ENCODE measurements at regions of chr9 and their contacts with region 1.

Region 1: DNA sequence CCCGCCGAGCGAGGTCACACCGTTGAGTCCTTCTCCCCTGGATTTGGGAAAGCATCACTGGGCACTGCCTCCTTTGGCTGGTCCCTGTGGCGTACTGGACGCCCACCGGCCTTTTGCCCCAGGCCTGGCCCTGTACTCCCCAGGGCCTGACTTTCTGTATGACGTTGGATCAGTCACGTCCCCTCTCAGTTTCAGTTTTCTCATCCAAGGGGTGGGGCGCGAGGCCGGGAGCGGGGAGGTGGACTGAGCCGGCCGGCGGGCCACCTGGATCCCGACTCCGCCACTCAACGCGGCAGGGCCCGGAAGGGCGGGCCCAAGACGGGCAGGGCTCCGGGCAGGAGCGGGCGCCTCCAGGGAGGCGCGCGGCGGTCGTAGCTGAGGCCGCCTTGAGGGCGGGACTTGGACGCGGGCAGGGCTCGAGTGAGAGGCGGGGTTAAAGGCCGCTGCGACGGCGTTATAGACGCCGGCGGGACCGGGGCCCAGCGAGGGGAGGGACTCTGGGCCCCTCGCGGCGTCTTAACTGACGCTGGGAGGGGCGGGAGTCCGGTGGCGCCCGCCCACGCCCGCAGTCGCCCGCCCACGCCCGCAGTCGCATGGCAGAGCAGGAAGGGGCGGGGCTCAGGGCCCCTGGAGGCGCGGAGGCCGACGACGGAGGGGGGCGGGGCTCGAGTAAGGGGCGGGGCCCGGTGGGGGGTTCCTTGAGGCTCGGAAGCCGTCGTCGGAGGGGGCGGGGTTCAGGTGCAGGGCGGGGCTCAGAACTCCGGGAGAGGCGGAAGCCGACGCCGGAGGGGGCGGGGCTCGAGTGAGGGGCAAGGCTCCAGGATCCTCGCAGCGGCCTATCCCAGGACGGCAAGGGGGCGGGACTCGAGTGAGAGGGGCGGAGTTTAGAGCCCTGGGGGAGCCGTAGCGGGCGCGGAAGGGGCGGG is 549 bp upstream of the CARD19 start:
- DNase-seq: peak; percentile 100
- H3K4me3 Mint-ChIP-seq: peak overlapping the region; percentile 79
- H3K27ac Mint-ChIP-seq: peak overlapping the region; percentile 98
- H3K4me1 Mint-ChIP-seq: peaks cover 65% of the 10 kb centered on the region
- H3K27me3 Mint-ChIP-seq: no peaks in the 10 kb centered on the region

Region 2: GRCh38 chr9:92837191-92837590 is 258.3 kb before region 1 on chr9:
- intact Hi-C with region 1: no loop called
- DNase-seq: no peak
- H3K4me3 Mint-ChIP-seq: no peak overlapping the region
- H3K27ac Mint-ChIP-seq: no peak overlapping the region
- H3K4me1 Mint-ChIP-seq: no peaks in the 10 kb centered on the region
- H3K27me3 Mint-ChIP-seq: no peaks in the 10 kb centered on the region

Region 3: GRCh38 chr9:93028448-93029006 is 66.9 kb before region 1 on chr9:
- intact Hi-C with region 1: loop called (anchors 1 kb)
- DNase-seq: peak; percentile 92
- H3K4me3 Mint-ChIP-seq: peak overlapping the region; percentile 82
- H3K27ac Mint-ChIP-seq: peak overlapping the region; percentile 94
- H3K4me1 Mint-ChIP-seq: peaks cover 60% of the 10 kb centered on the region
- H3K27me3 Mint-ChIP-seq: no peaks in the 10 kb centered on the region

Region 4: DNA sequence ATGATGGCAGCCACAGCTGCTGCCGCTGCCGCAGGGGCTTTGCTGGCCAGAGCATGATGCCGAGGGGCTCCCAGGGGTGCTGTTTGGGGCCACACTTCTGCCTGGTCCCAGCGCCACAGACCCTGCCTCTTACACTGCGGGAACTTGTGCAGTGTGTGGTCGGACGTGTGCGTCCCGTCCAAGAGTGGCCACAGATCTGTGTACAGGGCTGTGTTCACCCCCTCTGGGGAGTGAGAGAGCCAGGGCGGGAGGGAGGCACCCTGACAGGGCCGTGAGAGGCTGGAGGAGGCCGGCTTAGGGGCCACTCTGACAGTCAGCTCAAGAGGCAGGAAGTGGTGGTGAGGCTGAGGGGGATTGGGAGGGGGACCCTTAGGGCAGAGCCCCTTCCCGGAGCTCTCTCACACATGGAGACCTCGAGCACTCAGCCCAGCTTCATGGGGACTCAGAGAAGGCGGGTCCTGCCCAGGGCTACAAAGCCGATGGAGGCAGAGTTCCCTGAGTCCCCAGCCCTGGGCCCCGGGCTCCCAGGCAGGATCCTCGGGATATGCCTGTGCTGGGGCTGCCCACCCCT is 12.5 kb before region 1 on chr9:
- intact Hi-C with region 1: loop called (anchors 1 kb)
- DNase-seq: peak; percentile 69
- H3K4me3 Mint-ChIP-seq: peak overlapping the region; percentile 26
- H3K27ac Mint-ChIP-seq: peak overlapping the region; percentile 92
- H3K4me1 Mint-ChIP-seq: peaks cover 30% of the 10 kb centered on the region
- H3K27me3 Mint-ChIP-seq: no peaks in the 10 kb centered on the region

Region 5: DNA sequence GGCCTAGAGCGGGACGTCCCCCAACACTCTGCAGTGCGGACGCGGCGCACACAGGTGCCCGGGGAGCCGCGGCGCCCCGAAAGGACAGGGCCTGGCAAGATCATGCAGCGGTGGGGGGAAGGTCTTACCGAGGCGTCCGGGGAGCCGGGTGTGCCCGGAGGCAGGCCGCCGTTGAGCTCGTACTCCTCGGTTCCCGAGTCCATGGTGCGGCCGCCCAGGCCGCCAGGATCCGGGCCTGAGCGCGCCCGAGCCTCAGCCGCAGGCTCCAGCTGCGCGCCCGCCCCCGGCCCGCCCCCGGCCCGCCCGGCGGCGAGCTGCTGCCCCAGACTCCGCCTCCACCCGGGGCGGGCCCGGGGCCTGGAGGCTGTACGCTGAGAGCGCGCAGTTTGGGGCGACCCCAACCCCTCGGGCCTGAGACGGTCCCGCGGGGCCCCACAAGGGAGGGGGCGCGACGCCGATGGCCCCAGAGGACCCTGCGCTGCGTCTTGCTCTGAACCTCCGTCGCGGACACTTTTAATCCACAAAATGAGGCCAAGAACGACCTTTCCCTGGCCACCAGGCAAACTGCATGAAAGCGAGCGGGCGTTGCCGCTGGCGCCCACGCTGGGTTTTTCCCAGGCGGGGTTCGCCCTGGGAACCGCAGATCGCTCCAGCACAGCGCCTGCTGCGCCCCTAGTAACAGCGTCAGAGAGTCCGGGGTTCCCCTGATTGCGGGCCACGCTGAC is 38.7 kb after region 1 on chr9 and contains the start of gene NINJ1:
- intact Hi-C with region 1: loop called (anchors 1 kb)
- DNase-seq: peak; percentile 97
- H3K4me3 Mint-ChIP-seq: peak within 1 kb of the TSS; percentile 93
- H3K27ac Mint-ChIP-seq: peak within 1 kb of the TSS; percentile 97
- H3K4me1 Mint-ChIP-seq: peaks cover 60% of the 10 kb centered on the region
- H3K27me3 Mint-ChIP-seq: no peaks in the 10 kb centered on the region
- total RNA-seq, gene NINJ1: 103 and 110 TPM in 2 replicates

Region 6: DNA sequence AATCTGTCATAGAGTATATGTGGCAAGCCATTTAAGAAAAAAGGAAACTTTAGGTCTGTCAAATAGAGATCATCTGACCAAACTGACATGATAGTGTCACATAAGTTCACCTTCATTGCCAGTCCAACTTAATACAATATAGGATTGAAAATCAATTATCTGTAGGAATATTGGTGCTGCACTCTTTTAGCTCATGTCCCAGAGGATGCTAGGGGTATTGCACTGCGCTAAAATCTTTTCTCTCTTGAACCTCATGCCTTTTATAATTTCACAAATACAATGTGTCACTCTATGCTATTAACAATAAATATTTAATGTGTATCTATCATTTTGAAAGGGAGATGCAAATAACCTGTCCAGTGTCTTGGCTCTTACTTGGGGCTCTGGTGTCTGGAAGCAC is 283.6 kb after region 1 on chr9:
- intact Hi-C with region 1: no loop called
- DNase-seq: no peak
- H3K4me3 Mint-ChIP-seq: no peak overlapping the region
- H3K27ac Mint-ChIP-seq: no peak overlapping the region
- H3K4me1 Mint-ChIP-seq: no peaks in the 10 kb centered on the region
- H3K27me3 Mint-ChIP-seq: peaks cover 33% of the 10 kb centered on the region

Region 7: DNA sequence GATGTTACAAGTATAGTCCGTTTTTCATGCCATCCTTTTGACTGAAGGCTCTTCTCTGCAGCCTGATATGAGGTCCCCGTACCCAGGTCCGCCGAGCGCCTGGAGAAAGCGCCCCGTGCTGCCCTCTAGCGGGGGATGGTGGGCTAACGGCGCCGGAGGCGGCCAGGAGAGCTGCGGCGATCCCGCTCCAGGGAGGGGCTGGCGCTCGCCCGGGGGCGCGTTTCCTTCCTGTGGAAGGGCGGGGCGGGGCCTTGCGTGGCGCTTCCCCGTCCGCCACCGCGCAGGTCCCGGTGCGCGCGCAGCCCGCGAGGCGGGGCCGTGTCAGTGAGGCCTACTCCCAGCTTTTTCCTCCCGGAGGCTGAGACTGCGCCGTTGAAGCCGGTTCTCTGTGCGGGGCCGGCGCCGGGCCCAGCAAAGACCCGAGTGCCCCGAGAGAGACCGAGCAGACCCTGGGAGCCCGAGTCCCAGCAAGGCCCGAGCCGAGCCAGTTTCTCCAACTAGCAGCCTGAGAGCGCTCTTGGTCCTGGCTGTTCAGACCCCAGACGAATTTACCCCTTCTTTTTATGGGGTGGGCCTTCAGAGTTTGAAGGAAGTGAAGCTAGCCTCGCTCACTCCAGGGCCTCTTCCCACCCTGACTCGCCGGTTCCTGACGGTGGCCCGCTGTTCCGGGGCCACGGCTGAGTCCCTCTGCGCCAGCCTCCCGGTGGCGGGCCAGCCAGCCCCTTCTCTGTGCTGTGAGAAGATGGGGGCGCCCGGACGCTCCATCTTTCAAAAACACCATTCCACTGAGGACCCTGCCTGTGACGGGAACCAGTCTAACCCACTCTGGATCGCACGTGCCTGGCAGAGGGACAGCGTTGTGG is 471.2 kb after region 1 on chr9:
- intact Hi-C with region 1: loop called (anchors 2 kb)
- DNase-seq: peak; percentile 100
- H3K4me3 Mint-ChIP-seq: peak overlapping the region; percentile 89
- H3K27ac Mint-ChIP-seq: peak overlapping the region; percentile 93
- H3K4me1 Mint-ChIP-seq: peaks cover 20% of the 10 kb centered on the region
- H3K27me3 Mint-ChIP-seq: no peaks in the 10 kb centered on the region

Measured in activated CD4-positive, alpha-beta T cell treated with anti-CD3 and anti-CD28 coated beads, Interleukin-2, amount 10 ng/mL, durations not matched to agents 24 days and 14 days (primary cell).